ENCODE measurements at regions of chrX and their contacts with region 1.

Region 1: DNA sequence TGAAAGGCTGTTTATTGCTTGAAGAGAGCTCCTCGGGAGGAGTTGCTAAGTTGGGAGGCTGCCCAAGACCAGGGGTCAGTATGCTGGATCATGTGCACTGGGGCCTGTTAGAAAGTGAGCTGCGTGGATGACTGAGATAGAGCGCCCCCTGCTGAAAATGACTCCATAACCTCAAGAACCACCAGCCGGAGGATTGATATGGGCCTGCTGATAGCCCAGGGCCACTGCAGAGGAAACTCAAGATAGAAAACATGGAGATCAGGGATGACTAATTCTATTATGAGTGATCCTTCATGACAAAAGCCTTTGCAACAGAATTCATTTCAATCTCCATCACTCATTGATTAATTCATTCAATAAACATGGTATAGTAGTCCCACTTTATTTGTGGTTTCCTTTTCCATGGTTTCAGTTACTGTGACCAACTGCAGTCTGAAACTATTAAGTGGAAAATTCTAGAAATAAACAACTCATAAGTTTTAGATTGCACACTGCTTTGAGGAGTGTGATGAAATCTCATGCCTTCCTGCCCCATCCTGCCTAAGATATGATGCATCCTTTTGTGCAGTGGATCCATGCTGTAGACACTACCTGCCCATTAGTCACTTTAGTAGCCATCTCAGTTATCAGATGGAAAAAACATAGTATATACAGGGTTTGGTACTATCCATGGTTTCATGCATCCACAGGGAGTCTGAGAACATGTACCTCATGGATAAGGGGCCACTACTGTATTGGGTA is 126.7 kb upstream of the MBNL3 start:
- DNase-seq: peak in 3 of 10 donors; percentile 18 to 43 (median 39)
- H3K4me3 ChIP-seq: no peak overlapping the region
- H3K27ac ChIP-seq: no peak overlapping the region
- H3K27me3 ChIP-seq: peaks cover 0 to 86% (median 19%) of the 10 kb centered on the region in 45 donors
- CTCF ChIP-seq: peak in 52 of 56 donors; percentile 20 to 68 (median 47)

Region 2: DNA sequence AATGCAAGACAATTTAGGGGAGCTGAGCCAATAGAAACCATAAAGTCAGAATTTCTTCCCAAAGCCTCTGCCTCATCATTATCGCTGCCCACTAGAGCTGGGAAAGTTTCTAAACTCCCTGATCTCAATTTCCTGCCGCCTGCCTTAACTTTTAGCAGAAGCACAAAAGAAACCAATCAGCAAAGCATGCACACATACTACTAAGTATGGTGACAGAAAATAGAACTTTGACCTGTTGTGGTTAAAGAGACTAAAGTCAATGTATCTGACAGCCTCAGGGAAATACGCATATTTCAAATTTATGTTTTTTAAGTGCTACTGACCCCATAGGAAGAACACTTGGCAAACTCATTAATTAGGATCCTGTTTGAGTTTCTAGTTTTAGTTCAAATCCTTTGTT is 582.4 kb before region 1 on chrX:
- intact Hi-C with region 1: no loop called
- DNase-seq: no peak
- H3K4me3 ChIP-seq: no peak overlapping the region
- H3K27ac ChIP-seq: no peak overlapping the region
- H3K27me3 ChIP-seq: peaks cover 0 to 91% (median 47%) of the 10 kb centered on the region in 45 donors
- CTCF ChIP-seq: no peak

Region 3: GRCh38 chrX:132226169-132226568 is 389.4 kb before region 1 on chrX:
- intact Hi-C with region 1: loop called (anchors 5 to 10 kb)
- DNase-seq: no peak
- H3K4me3 ChIP-seq: no peak overlapping the region
- H3K27ac ChIP-seq: no peak overlapping the region
- H3K27me3 ChIP-seq: peaks cover 0 to 74% (median 13%) of the 10 kb centered on the region in 45 donors
- CTCF ChIP-seq: peak in 53 of 56 donors; percentile 9 to 65 (median 40)

Region 4: DNA sequence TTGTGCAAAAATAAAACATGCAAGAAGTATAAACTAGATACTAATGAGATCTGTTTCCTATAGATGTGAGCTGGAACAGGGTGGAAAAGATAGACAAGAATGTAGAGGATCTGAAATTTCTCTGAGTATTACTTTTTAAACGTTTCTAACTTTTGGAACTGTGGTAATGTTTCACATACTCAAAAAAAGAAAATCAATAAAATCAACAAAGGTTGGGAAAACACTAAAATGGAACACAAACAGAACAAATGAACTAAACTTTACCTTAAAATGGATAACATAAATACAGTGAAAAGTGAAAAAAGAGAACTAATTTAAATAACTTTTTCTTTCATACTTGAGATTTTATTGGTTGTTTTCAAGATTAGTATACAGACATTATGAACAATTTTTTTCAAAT is 94.8 kb before region 1 on chrX:
- intact Hi-C with region 1: no loop called
- DNase-seq: no peak
- H3K4me3 ChIP-seq: no peak overlapping the region
- H3K27ac ChIP-seq: no peak overlapping the region
- H3K27me3 ChIP-seq: peaks cover 0 to 72% (median 6%) of the 10 kb centered on the region in 45 donors
- CTCF ChIP-seq: no peak

Region 5: DNA sequence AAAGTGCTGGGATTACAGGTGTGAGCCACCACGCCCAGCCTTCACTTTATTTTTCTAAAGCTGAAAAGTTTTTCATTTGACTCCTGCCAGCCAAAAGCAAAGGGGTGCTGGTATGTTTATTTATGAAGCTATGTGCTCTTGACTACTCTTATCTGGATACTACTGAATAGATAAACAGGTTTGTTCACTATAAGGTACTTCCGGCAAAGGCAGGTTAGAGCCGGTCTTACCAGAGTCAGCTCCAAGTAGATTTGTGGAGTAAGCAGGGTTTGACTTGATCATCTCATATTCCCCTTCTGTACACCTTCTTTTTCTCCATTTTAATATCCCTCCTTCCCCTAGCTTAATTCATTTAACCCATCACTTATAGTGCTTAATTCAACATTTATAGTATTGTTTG is 48.7 kb after region 1 on chrX:
- intact Hi-C with region 1: no loop called
- DNase-seq: no peak
- H3K4me3 ChIP-seq: no peak overlapping the region
- H3K27ac ChIP-seq: no peak overlapping the region
- H3K27me3 ChIP-seq: peaks cover 0 to 89% (median 19%) of the 10 kb centered on the region in 45 donors
- CTCF ChIP-seq: no peak